ENCODE measurements at regions of chr3 and their contacts with region 1.

Region 1: GRCh38 chr3:170189398-170190256 is 8.1 kb upstream of the PHC3 start:
- DNase-seq: no peak
- ATAC-seq: peak; percentile 7
- H3K4me3 Mint-ChIP-seq: no peak overlapping the region
- H3K27ac Mint-ChIP-seq: no peak overlapping the region
- H3K4me1 Mint-ChIP-seq: peaks cover 7% of the 10 kb centered on the region
- H3K27me3 Mint-ChIP-seq: no peaks in the 10 kb centered on the region
- CTCF ChIP-seq: no peak

Region 2: DNA sequence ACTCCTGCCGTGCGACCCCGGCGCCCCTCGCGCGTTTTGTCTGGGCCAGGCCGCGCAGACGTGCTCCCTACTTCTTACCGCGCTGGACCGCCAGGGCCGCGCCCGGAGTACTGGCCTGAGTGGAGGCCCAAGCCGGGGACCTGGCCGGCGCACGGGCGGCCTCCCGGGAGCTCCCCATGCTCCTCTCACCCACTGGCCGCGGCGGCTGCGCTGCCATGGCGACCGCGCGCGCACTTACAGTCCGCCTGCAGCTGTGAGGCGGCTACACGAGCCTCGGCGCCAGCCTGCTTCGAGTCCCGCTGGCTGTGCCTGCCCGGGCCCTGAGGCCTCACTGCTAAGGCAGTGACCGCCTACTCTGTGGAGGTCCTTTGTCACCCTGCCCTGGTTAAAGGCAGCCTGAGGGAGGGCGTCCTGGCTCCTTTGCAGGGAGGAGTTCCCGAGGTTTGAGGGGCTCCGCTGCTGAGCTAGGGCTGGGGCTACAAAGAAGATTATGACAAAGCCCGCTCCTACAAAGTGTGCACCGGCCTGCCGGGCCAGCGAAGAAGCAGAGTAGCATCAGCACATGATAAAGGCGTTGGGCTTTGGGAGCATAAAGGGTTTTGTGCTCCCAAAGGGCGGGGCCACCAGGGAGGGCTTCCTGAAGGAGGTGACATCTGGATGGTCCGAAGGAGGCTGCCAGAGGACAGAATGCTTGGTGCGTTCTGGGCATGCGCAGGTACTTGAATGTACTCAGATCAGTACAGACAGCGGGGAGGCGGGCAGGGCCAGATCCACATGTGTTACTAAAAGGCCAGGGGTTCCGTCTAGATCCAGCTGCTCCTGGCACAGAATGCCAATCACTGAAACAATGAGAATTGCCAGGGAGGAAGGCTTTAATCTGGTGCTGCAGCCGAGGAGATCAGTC is 377.0 kb before region 1 on chr3 and contains the starts of genes LRRC34 and LRRIQ4:
- CTCF ChIA-PET with region 1: no interaction called
- POLR2A ChIA-PET with region 1: no interaction called
- intact Hi-C with region 1: no loop called
- DNase-seq: peak; percentile 70
- ATAC-seq: peak; percentile 56
- H3K4me3 Mint-ChIP-seq: peak within 1 kb of the TSS; percentile 85
- H3K27ac Mint-ChIP-seq: peak within 1 kb of the TSS; percentile 97
- H3K4me1 Mint-ChIP-seq: peaks cover 37% of the 10 kb centered on the region
- H3K27me3 Mint-ChIP-seq: no peaks in the 10 kb centered on the region
- CTCF ChIP-seq: no peak
- total RNA-seq, gene LRRC34: 4.2 and 5.7 TPM in 2 replicates
- total RNA-seq, gene LRRIQ4: 0.29 and 0.40 TPM in 2 replicates

Region 3: DNA sequence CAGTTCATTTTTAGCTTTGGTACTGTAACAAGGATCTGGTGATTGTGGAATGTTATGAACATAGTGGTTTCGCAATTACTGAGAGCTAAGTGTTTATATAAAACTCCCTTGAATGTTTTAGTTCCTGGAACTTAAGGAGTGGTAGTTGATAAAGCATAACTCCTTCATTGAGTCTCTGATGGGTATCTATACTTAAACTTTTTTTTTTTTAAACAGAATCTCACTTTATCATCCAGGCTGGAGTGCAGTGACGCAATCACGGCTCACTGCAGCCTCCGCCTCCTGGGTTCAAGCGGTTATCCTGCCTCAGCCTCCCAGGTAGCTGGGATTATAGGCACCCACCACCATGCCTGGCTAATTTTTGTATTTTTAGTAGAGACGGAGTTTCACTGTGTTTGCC is 43.9 kb after region 1 on chr3:
- CTCF ChIA-PET with region 1: no interaction called
- POLR2A ChIA-PET with region 1: no interaction called
- intact Hi-C with region 1: no loop called
- DNase-seq: no peak
- ATAC-seq: no peak
- H3K4me3 Mint-ChIP-seq: no peak overlapping the region
- H3K27ac Mint-ChIP-seq: no peak overlapping the region
- H3K4me1 Mint-ChIP-seq: peaks cover 7% of the 10 kb centered on the region
- H3K27me3 Mint-ChIP-seq: no peaks in the 10 kb centered on the region
- CTCF ChIP-seq: no peak

Region 4: DNA sequence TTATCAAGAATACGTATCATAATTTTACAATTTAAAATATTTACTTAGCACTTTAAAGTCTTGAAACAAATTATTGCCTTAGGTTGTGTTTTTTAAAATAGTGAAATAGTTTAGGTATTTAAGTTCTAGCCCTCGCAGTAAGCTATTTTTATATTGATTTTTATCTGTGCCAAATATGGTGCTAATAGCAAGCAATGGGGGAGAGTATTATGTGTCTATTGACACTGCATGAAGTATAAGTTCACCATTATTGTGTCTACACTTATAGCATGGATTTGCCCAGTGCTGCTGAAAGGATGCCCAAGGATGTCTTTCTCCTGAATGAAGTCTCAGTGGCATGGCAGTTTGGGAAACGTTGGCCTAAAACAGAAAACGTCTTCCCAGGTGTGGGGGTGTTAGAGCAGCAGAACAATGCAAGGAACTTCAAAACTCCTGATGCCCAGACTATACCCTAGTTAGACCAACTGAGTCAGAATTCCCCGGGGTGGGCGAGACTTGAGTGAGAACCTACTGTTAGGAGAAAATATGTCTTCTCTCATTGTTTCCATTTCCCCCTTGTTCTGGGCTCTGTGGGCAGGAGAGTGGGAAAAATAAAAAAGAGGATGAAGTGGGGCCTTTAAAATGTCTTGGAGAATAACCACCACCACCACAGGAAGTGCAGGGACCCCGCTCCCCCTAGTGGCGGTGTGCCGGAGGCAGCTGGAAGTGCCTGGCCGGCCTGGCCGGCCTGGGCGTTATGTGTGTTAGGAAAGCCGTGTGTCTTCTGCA is 500.4 kb after region 1 on chr3:
- CTCF ChIA-PET with region 1: no interaction called
- POLR2A ChIA-PET with region 1: no interaction called
- intact Hi-C with region 1: loop called (anchors 1 kb)
- DNase-seq: peak; percentile 28
- ATAC-seq: peak; percentile 54
- H3K4me3 Mint-ChIP-seq: no peak overlapping the region
- H3K27ac Mint-ChIP-seq: no peak overlapping the region
- H3K4me1 Mint-ChIP-seq: no peaks in the 10 kb centered on the region
- H3K27me3 Mint-ChIP-seq: peaks cover 3% of the 10 kb centered on the region
- CTCF ChIP-seq: no peak

Region 5: DNA sequence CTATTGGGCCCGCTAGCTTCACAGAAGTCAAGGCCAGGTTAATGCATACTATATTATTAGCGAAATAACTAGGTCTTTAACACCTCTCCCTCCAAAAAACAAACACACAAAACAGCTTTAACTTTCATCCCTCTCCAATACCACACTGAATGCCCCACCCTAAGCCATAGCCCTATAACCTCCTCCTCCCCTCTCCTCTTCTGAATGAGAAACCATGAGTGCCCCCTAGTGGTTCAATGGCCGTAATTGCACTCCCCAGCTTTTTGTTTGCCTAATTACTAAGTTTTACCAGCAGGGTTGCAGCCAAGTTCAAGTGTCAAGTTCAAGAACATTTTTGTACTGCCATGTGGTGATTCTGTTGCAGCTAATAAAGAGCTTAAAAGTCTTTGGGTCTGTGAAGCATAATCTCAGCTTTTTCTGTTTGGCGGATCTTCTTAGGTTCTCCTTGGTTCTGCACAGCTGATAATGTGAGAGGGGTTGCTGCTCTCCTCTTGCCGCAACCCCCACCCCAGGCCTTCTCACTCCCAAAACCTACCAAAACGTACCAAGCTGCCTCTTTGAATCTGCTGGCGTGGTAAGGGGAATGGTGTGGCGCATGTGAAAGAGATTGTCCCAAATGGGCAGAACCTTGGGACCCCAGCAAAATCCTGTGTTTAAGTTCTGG is 622.4 kb after region 1 on chr3:
- CTCF ChIA-PET with region 1: interaction called, 9 read pairs
- POLR2A ChIA-PET with region 1: no interaction called
- intact Hi-C with region 1: loop called (anchors 1 kb)
- DNase-seq: peak; percentile 30
- ATAC-seq: peak; percentile 97
- H3K4me3 Mint-ChIP-seq: no peak overlapping the region
- H3K27ac Mint-ChIP-seq: no peak overlapping the region
- H3K4me1 Mint-ChIP-seq: no peaks in the 10 kb centered on the region
- H3K27me3 Mint-ChIP-seq: no peaks in the 10 kb centered on the region
- CTCF ChIP-seq: peak; percentile 84